Common myeloid progenitor, CD34-positive (primary cell): ENCODE measurements at regions of chrX and their contacts with region 1.

Region 1: GRCh38 chrX:49884290-49884862 is 5.1 kb downstream of the USP27X start:
- DNase-seq: peak; percentile 62 to 87 (median 85)
- H3K4me3 ChIP-seq: no peak overlapping the region
- H3K27ac ChIP-seq: no peak overlapping the region
- H3K4me1 ChIP-seq: peaks cover 0 to 21% (median 6%) of the 10 kb centered on the region in 4 experiments
- H3K27me3 ChIP-seq: no peaks in the 10 kb centered on the region

Region 2: DNA sequence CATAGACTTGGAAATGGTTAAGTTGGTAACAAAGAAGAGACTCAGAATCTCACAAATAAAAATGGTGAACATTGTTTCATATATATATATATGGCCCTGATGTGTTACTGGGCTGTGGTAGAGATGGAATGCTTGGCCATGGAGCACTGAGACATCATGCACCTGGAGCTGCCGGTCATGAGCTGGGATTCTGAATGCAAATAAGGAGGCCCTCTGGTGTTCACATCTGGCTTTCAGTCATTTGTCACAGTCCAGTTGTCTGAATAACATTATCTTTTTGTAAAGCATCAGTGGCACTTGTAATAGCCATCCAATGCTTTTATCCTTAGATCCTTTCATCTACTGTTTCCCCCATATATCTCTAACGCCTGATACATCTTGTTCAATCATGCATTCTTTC is 246.7 kb before region 1 on chrX:
- CTCF ChIA-PET with region 1: no interaction called
- POLR2A ChIA-PET with region 1: no interaction called
- DNase-seq: no peak
- H3K4me3 ChIP-seq: no peak overlapping the region
- H3K27ac ChIP-seq: no peak overlapping the region
- H3K4me1 ChIP-seq: no peaks in the 10 kb centered on the region
- H3K27me3 ChIP-seq: no peaks in the 10 kb centered on the region

Region 3: DNA sequence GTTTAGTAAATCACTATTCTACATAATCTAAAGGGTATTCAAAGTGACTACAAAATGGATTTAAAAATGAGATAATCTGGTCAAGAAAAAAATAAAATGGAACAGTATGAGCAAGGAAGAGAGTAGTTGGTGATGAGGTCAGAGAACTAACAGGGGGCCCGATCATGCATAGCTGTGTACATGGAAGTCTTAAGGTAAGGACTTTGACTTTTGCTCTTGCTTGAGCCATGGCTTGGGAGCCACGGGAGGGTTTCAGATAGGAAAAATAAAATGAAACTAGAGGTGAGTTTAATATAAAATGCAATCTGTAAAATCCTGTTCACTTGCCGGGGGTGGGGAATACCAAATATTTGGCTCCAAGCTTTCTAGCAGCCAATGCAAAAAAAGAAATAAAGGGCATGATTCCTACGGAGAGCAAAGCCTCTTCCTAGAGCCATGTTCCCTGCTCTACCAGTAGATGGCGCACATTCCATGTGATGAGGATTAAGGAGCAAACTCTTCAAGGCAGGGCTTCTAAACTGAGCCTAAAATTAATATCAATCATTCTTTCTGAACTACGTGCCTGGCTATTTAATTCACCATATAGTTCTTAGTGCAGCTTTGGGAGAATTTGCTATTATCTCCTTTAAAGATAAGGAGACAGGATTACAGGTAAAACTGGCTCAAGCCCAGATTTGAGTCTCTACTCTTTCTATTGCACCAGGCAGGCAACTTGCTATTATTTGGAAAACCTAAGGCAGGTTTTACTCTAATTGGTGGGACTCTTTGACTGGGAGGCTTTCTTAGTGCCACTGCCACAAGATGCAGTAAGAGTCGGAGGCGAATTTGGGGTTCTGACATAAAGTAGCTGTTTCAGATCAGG is 31.2 kb after region 1 on chrX:
- CTCF ChIA-PET with region 1: interaction called, 27 read pairs
- POLR2A ChIA-PET with region 1: no interaction called
- DNase-seq: peak; percentile 42 to 77 (median 74)
- H3K4me3 ChIP-seq: no peak overlapping the region
- H3K27ac ChIP-seq: no peak overlapping the region
- H3K4me1 ChIP-seq: peaks cover 0 to under 1% (median under 1%) of the 10 kb centered on the region in 4 experiments
- H3K27me3 ChIP-seq: peaks cover 0 to 6% (median 0%) of the 10 kb centered on the region in 5 experiments

Region 4: DNA sequence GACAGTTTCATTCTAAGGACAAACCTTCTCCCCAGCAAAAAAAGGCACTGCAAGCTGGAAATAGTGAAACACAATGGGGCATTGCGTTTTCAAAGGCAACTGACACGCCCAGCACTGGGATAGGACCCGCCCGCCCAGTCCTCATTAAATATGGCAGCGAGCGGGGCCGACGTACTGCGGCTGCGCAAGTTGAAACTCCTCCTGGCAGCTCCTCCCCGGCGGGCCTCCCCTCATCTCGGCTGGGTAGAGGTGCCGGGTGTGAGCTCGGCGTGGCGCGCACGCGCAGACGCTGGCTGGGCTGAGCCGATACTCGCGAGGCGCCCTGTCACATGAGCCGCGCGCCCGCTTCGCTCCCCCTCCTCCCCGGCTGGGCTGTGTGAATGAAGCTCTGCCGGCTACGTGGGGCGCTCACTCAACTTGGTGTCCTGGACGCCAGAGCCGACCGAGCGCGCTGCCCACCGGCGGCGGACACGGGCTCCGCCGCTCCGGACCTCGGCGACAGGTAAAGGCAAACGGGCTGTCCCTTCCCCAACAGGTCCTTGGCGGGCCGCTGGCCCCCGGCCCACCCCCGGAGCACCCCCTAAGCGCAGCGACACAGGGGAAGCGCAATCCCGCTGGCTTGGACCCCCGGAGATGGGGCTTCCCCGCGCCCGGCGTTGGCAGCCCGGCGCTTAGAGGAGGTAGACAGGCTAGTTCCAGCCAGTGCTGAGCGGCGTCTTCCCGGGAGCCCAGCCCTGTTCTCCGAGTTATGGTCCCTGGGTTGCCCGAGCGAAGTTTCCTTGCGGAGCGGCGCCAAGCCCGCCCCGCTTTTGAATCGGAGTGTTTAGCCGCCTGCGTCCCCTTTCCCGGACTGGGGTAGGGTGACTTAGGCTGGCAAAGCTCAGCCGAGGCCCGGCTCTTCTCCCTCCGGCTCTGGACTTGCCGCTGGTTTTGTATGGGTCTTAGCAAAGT is 38.2 kb after region 1 on chrX and contains the start of gene CLCN5:
- CTCF ChIA-PET with region 1: interaction called, 27 read pairs
- POLR2A ChIA-PET with region 1: interaction called, 3 read pairs
- DNase-seq: peak; percentile 93 to 97 (median 97)
- H3K4me3 ChIP-seq: peak within 1 kb of the TSS; percentile 46 to 80 (median 69)
- H3K27ac ChIP-seq: peak within 1 kb of the TSS in 1 of 2 experiments; percentile 52
- H3K4me1 ChIP-seq: peaks cover 0 to 16% (median 2%) of the 10 kb centered on the region in 4 experiments
- H3K27me3 ChIP-seq: peaks cover 0 to 11% (median 2%) of the 10 kb centered on the region in 5 experiments